ENCODE measurements at regions of chr19 and their contacts with region 1.

Region 1: GRCh38 chr19:45902651-45903625 is 525 bp upstream of the MYPOP start:
- DNase-seq: peak; percentile 96
- ATAC-seq: peak; percentile 92
- H3K4me3 ChIP-seq: peak overlapping the region; percentile 98
- H3K27ac ChIP-seq: peak overlapping the region; percentile 27; the same call in 1 of the 2 replicates
- H3K4me1 ChIP-seq: peaks cover 10% of the 10 kb centered on the region
- H3K27me3 ChIP-seq: no peaks in the 10 kb centered on the region
- CTCF ChIP-seq: no peak
- EP300 ChIP-seq: no peak
- POLR2A ChIP-seq: peak; percentile 84
- RAD21 ChIP-seq: no peak

Region 2: GRCh38 chr19:45762870-45763631 is 139.9 kb before region 1 on chr19:
- CTCF ChIA-PET with region 1: no interaction called
- POLR2A ChIA-PET with region 1: no interaction called
- RAD21 ChIA-PET with region 1: no interaction called
- SMC1A ChIA-PET with region 1: no interaction called
- in situ Hi-C with region 1: no loop called
- intact Hi-C with region 1: no loop called
- DNase-seq: no peak
- ATAC-seq: no peak
- H3K4me3 ChIP-seq: no peak overlapping the region
- H3K27ac ChIP-seq: no peak overlapping the region
- H3K4me1 ChIP-seq: no peaks in the 10 kb centered on the region
- H3K27me3 ChIP-seq: no peaks in the 10 kb centered on the region
- CTCF ChIP-seq: no peak
- EP300 ChIP-seq: no peak
- POLR2A ChIP-seq: no peak
- RAD21 ChIP-seq: no peak

Region 3: GRCh38 chr19:45798995-45799517 is 103.9 kb before region 1 on chr19:
- CTCF ChIA-PET with region 1: interaction called, 11 read pairs
- POLR2A ChIA-PET with region 1: no interaction called
- RAD21 ChIA-PET with region 1: no interaction called
- SMC1A ChIA-PET with region 1: no interaction called
- in situ Hi-C with region 1: no loop called
- intact Hi-C with region 1: no loop called
- DNase-seq: peak; percentile 23
- ATAC-seq: peak; percentile 93
- H3K4me3 ChIP-seq: no peak overlapping the region
- H3K27ac ChIP-seq: no peak overlapping the region
- H3K4me1 ChIP-seq: peaks cover 8% of the 10 kb centered on the region
- H3K27me3 ChIP-seq: no peaks in the 10 kb centered on the region
- CTCF ChIP-seq: peak; percentile 75 to 91 (median 85)
- EP300 ChIP-seq: no peak
- POLR2A ChIP-seq: no peak
- RAD21 ChIP-seq: peak; percentile 39; the same call in 1 of the 2 replicates

Region 4: GRCh38 chr19:45817010-45817724 is 85.8 kb before region 1 on chr19:
- CTCF ChIA-PET with region 1: interaction called, 10 read pairs
- POLR2A ChIA-PET with region 1: no interaction called
- RAD21 ChIA-PET with region 1: interaction called, 11 read pairs
- SMC1A ChIA-PET with region 1: no interaction called
- in situ Hi-C with region 1: no loop called
- intact Hi-C with region 1: loop called (anchors 5 kb)
- DNase-seq: peak; percentile 75
- ATAC-seq: peak; percentile 99
- H3K4me3 ChIP-seq: no peak overlapping the region
- H3K27ac ChIP-seq: no peak overlapping the region
- H3K4me1 ChIP-seq: no peaks in the 10 kb centered on the region
- H3K27me3 ChIP-seq: no peaks in the 10 kb centered on the region
- CTCF ChIP-seq: peak; percentile 96 to 100 (median 98)
- EP300 ChIP-seq: no peak
- POLR2A ChIP-seq: no peak
- RAD21 ChIP-seq: peak; percentile 70

Region 5: DNA sequence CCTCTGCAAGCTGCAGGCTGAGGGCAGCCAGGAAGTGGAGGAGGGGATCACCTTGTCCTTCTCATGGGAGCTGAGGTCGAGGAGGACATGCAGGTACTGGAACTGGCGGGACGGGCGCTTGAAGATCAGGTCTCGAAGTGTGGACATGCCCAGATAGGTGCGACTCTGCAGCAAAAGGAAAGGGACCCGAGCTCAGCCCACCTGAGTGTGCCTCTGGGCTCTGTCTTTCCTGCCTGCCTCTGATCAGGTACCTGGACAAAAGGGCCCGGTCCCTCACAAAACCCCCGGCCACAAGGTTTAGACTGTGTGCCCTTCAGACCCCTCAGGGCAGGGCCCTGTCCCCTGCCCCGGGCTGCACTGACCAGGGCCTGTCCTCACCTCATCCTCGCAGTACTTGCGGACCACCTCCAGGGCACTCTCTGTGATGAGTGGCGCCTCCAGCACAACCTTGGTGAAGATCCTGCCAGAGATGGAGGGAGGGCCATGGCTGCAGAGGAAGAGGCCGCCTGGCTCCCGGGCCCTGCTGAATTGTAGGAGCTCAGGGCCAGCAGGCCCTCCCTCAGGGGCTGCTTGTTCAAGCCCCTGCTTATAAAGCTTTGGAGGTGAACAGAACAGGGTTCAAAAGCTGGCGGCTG is 75.4 kb before region 1 on chr19:
- CTCF ChIA-PET with region 1: no interaction called
- POLR2A ChIA-PET with region 1: no interaction called
- RAD21 ChIA-PET with region 1: no interaction called
- SMC1A ChIA-PET with region 1: no interaction called
- in situ Hi-C with region 1: no loop called
- intact Hi-C with region 1: no loop called
- DNase-seq: no peak
- ATAC-seq: no peak
- H3K4me3 ChIP-seq: no peak overlapping the region
- H3K27ac ChIP-seq: no peak overlapping the region
- H3K4me1 ChIP-seq: no peaks in the 10 kb centered on the region; the same call in 1 of the 2 replicates
- H3K27me3 ChIP-seq: no peaks in the 10 kb centered on the region
- CTCF ChIP-seq: no peak
- EP300 ChIP-seq: no peak
- POLR2A ChIP-seq: no peak; the same call in 1 of the 2 replicates
- RAD21 ChIP-seq: no peak

Region 6: GRCh38 chr19:45862564-45863334 is 40.2 kb before region 1 on chr19 and contains the start of gene SYMPK:
- CTCF ChIA-PET with region 1: interaction called, 28 read pairs
- POLR2A ChIA-PET with region 1: interaction called, 23 read pairs
- RAD21 ChIA-PET with region 1: interaction called, 26 read pairs
- SMC1A ChIA-PET with region 1: interaction called, 5 read pairs
- in situ Hi-C with region 1: no loop called
- intact Hi-C with region 1: no loop called
- DNase-seq: peak; percentile 94
- ATAC-seq: peak; percentile 94
- H3K4me3 ChIP-seq: peak within 1 kb of the TSS; percentile 97
- H3K27ac ChIP-seq: peak within 1 kb of the TSS; percentile 93
- H3K4me1 ChIP-seq: peaks cover 5% of the 10 kb centered on the region
- H3K27me3 ChIP-seq: peaks cover 0 to 6% of the 10 kb centered on the region in 2 experiments; a peak in 2 of 4 replicates
- CTCF ChIP-seq: no peak
- EP300 ChIP-seq: 0 out of 4 replicates have a peak, but pooled peaks of 1 of the 2 experiments have one; percentile 10
- POLR2A ChIP-seq: peak; percentile 92
- RAD21 ChIP-seq: no peak
- polyA plus RNA-seq, gene SYMPK: 0.49 to 0.79 TPM

Region 7: GRCh38 chr19:45886427-45887199 is 16.3 kb before region 1 on chr19:
- CTCF ChIA-PET with region 1: interaction called, 18 read pairs
- POLR2A ChIA-PET with region 1: interaction called, 7 read pairs
- RAD21 ChIA-PET with region 1: interaction called, 12 read pairs
- SMC1A ChIA-PET with region 1: interaction called, 9 read pairs
- in situ Hi-C with region 1: no loop called
- intact Hi-C with region 1: no loop called
- DNase-seq: peak; percentile 73
- ATAC-seq: peak; percentile 75
- H3K4me3 ChIP-seq: peak overlapping the region; percentile 68
- H3K27ac ChIP-seq: peak overlapping the region; percentile 95
- H3K4me1 ChIP-seq: peaks cover 20% of the 10 kb centered on the region
- H3K27me3 ChIP-seq: no peaks in the 10 kb centered on the region
- CTCF ChIP-seq: no peak
- EP300 ChIP-seq: no peak; a peak in 1 of 4 replicates
- POLR2A ChIP-seq: peak; percentile 63
- RAD21 ChIP-seq: no peak

Measured in GM12878 (cell line).